ENCODE measurements at regions of chr11 and their contacts with region 1.

Region 1: GRCh38 chr11:75768112-75768908 is at the start of gene DGAT2:
- DNase-seq: peak; percentile 94
- ATAC-seq: peak; percentile 80
- H3K4me3 ChIP-seq: peak within 1 kb of the TSS; percentile 57 to 79 (median 69)
- H3K4me3 Mint-ChIP-seq: peak within 1 kb of the TSS; percentile 90
- H3K27ac ChIP-seq: peak within 1 kb of the TSS; percentile 82 to 89
- H3K27ac Mint-ChIP-seq: peak within 1 kb of the TSS; percentile 98
- H3K4me1 ChIP-seq: peaks cover 34 to 47% of the 10 kb centered on the region in 2 donors
- H3K4me1 Mint-ChIP-seq: peaks cover 55% of the 10 kb centered on the region
- H3K27me3 ChIP-seq: no peaks in the 10 kb centered on the region
- H3K27me3 Mint-ChIP-seq: no peaks in the 10 kb centered on the region
- CTCF ChIP-seq: peak; percentile 23
- total RNA-seq, gene DGAT2: 6.1 and 6.5 TPM in 2 replicates

Region 2: DNA sequence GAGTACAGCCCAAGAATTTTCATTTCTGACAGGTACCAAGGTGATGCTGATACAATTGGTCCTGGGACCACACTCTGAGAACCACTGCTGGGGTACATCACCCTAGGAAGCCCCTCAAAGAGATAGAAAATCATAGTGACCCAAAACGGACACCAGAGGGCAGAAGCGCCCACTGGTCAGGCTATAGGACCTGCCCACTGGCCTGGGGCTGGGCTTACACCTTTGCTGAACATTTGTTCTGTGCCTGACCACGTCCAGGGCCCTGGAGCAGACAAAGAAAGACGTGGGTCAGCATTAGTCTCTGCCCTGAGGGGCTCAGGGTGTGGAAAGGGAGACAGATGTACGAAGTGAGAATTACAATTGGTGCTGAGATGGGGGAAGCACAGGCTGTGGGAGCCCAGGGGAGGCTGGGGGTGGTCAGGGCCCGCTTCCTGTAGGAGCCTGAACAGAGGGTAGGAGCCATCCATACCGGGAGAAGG is 220.7 kb before region 1 on chr11:
- CTCF ChIA-PET with region 1: no interaction called
- POLR2A ChIA-PET with region 1: no interaction called
- intact Hi-C with region 1: loop called (anchors 1 kb)
- DNase-seq: peak; percentile 66
- ATAC-seq: peak; percentile 47
- H3K4me3 ChIP-seq: no peak overlapping the region
- H3K4me3 Mint-ChIP-seq: no peak overlapping the region
- H3K27ac ChIP-seq: no peak overlapping the region
- H3K27ac Mint-ChIP-seq: no peak overlapping the region
- H3K4me1 ChIP-seq: no peaks in the 10 kb centered on the region
- H3K4me1 Mint-ChIP-seq: no peaks in the 10 kb centered on the region
- H3K27me3 ChIP-seq: peaks cover 0 to 20% (median 5%) of the 10 kb centered on the region in 4 experiments
- H3K27me3 Mint-ChIP-seq: peaks cover 14% of the 10 kb centered on the region
- CTCF ChIP-seq: peak; percentile 84

Region 3: GRCh38 chr11:75689863-75690609 is 78.3 kb before region 1 on chr11:
- CTCF ChIA-PET with region 1: no interaction called
- POLR2A ChIA-PET with region 1: no interaction called
- intact Hi-C with region 1: loop called (anchors 1 kb)
- DNase-seq: peak; percentile 86
- ATAC-seq: peak; percentile 91
- H3K4me3 ChIP-seq: peak overlapping the region in 1 of 5 experiments; percentile 17
- H3K4me3 Mint-ChIP-seq: peak overlapping the region; percentile 72
- H3K27ac ChIP-seq: peak overlapping the region; percentile 79 to 80
- H3K27ac Mint-ChIP-seq: peak overlapping the region; percentile 92
- H3K4me1 ChIP-seq: peaks cover 27% of the 10 kb centered on the region in 2 donors
- H3K4me1 Mint-ChIP-seq: peaks cover 33% of the 10 kb centered on the region
- H3K27me3 ChIP-seq: peaks cover 0 to 2% (median 0%) of the 10 kb centered on the region in 4 experiments
- H3K27me3 Mint-ChIP-seq: peaks cover under 1% of the 10 kb centered on the region
- CTCF ChIP-seq: no peak

Region 4: DNA sequence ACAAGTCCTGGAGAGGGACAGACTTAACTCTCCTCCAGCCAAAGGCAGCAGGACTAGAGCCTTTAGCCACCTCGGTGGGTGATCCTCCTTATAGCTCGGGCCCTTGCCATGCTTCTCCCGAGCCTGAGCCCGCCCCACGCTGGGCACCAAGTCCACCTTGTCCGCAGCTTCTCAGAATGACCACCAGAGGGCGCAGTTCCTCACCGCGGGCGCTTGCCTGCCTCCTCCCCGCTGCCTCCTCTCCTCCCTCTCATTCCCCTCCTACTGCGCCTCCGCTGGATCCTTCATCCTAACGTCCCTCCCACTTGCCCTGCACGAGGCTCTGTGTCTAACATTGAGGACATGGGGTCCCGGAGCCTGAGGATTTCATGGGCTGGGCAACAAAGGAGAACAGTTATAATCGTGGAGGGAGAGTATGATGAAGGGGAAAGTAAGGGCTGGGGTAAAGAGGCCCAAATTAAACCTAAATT is 62.0 kb before region 1 on chr11:
- CTCF ChIA-PET with region 1: interaction called, 6 read pairs
- POLR2A ChIA-PET with region 1: no interaction called
- intact Hi-C with region 1: loop called (anchors 2 kb)
- DNase-seq: peak; percentile 82
- ATAC-seq: peak; percentile 84
- H3K4me3 ChIP-seq: no peak overlapping the region
- H3K4me3 Mint-ChIP-seq: no peak overlapping the region
- H3K27ac ChIP-seq: no peak overlapping the region
- H3K27ac Mint-ChIP-seq: no peak overlapping the region
- H3K4me1 ChIP-seq: peaks cover 0 to 7% of the 10 kb centered on the region in 2 donors
- H3K4me1 Mint-ChIP-seq: peaks cover 12% of the 10 kb centered on the region
- H3K27me3 ChIP-seq: peaks cover 0 to 8% (median 2%) of the 10 kb centered on the region in 4 experiments
- H3K27me3 Mint-ChIP-seq: peaks cover 11% of the 10 kb centered on the region
- CTCF ChIP-seq: peak; percentile 97

Region 5: DNA sequence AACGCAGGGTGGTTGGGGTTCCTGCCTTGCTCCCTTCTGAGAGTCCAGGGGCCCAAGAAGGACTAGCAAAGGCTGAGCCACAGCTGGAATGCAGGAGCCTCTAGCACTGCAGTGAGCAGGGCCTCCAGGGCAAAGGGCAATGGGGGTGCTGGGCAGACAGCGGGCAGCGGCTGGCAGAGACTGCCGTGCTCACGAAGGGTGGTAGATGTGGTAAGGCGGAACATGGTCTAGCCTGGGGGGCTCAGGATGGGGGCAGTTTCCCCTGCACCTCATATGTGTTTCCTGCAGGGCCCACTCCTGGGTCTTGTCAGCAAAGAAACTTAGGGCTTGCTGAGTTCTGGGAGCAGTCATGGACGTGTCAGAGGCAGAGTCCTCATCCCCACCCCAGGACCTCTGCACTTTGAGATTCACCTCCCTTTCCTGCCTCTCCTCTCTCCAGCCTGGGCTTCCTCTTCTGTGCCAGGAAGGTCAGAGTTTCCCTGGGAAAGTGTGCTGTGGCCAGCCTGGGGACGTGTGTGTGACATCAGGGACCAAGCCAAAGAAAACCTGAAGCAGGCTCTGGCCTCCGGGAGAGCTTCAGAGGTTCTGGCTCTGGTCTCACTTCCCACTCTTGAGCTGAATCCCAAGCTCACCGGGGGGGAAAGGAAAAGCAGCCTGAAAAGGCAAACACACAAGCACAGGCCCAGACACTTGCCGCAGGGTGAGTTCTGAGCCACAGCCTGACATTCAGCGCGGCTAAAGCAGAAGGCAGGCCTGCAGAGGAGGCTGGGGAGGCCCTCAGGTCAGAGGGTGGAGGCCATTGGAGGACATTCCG is 46.2 kb before region 1 on chr11:
- CTCF ChIA-PET with region 1: interaction called, 6 read pairs
- POLR2A ChIA-PET with region 1: interaction called, 3 read pairs
- intact Hi-C with region 1: loop called (anchors 1 kb)
- DNase-seq: no peak
- ATAC-seq: no peak
- H3K4me3 ChIP-seq: no peak overlapping the region
- H3K4me3 Mint-ChIP-seq: no peak overlapping the region
- H3K27ac ChIP-seq: no peak overlapping the region
- H3K27ac Mint-ChIP-seq: no peak overlapping the region
- H3K4me1 ChIP-seq: no peaks in the 10 kb centered on the region
- H3K4me1 Mint-ChIP-seq: no peaks in the 10 kb centered on the region
- H3K27me3 ChIP-seq: no peaks in the 10 kb centered on the region
- H3K27me3 Mint-ChIP-seq: no peaks in the 10 kb centered on the region
- CTCF ChIP-seq: no peak

Region 6: DNA sequence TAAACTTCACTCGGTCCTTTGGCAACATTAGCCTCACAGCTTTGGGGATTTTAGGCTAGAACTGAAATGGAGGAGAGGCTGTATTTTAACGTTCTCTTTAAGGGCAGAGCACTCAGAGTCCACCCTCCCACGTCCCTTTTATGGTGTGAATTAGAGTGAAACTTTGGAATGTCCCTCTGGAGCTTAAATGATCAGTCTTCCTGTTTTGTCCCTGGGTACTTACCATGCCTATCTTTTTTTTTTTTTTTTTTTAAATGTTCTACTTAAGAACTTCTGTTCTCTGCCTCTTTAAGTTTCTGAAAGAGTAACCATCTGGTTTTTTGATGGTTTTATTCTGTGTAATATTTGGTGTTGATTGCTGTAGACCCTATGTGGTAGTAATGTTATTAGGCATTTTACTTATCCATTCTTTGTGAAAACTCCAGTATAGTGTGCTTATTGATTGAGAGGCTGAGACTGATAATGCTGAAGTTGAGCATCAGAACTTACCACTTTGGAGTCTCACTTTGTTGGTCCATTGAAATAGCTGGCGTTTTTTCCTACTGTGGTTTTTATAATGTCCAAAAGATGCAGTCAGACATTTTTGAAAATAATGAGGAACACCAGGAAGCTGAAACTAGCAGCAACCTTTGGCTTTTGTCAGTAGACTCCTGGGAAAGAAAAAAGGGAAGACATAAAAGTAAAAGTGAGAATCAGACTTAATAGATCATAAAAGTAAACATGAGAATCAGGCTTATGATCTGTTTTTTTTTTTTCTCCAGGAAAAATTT is 58.3 kb after region 1 on chr11:
- CTCF ChIA-PET with region 1: interaction called, 4 read pairs
- POLR2A ChIA-PET with region 1: no interaction called
- intact Hi-C with region 1: loop called (anchors 1 kb)
- DNase-seq: peak; percentile 41
- ATAC-seq: no peak
- H3K4me3 ChIP-seq: peak overlapping the region in 1 of 5 experiments; percentile 26
- H3K4me3 Mint-ChIP-seq: peak overlapping the region; percentile 52
- H3K27ac ChIP-seq: peak overlapping the region; percentile 79 to 85
- H3K27ac Mint-ChIP-seq: peak overlapping the region; percentile 92
- H3K4me1 ChIP-seq: peaks cover 76 to 81% of the 10 kb centered on the region in 2 donors
- H3K4me1 Mint-ChIP-seq: peaks cover 80% of the 10 kb centered on the region
- H3K27me3 ChIP-seq: no peaks in the 10 kb centered on the region
- H3K27me3 Mint-ChIP-seq: no peaks in the 10 kb centered on the region
- CTCF ChIP-seq: no peak

Region 7: DNA sequence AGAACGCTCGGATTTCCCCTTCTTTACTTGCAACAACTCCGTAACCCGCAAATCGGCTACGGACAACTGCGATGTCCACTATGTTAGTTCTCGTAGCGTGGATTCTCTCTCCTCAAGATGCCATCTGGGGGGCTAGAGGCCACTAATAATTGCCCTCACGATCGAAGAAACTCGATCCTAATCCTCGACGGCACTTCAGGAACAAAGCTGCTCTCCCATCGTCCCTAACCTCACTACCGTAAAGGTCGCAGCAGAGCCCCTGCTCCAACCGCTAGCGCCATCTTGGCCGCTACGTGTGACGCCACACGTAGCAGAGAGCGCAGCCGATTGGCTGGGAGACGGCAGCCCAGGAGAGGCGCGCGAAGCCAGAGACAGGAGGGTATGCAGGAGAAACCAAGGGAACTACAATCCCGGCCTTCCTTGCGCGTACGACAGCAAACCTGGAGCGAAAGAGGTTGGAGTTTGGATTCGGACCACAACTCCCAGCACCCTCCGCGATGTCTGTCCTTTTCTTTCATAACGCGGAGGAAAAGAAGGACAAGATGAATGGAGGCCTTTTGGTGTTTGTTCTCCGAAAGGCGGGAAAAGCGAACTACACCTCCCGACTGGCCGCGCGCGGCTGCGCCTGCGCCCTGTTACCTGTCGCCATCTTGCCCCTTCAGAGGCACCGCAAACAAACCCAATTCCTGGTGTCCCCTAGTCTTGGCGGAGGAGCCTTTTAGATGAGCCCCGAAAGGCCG is 676.2 kb after region 1 on chr11 and contains the start of gene EMSY:
- CTCF ChIA-PET with region 1: no interaction called
- POLR2A ChIA-PET with region 1: no interaction called
- intact Hi-C with region 1: loop called (anchors 5 kb)
- DNase-seq: peak; percentile 96
- ATAC-seq: peak; percentile 97
- H3K4me3 ChIP-seq: peak within 1 kb of the TSS; percentile 87 to 99 (median 97)
- H3K4me3 Mint-ChIP-seq: peak within 1 kb of the TSS; percentile 96
- H3K27ac ChIP-seq: peak within 1 kb of the TSS; percentile 80 to 86
- H3K27ac Mint-ChIP-seq: peak within 1 kb of the TSS; percentile 98
- H3K4me1 ChIP-seq: peaks cover 19 to 23% of the 10 kb centered on the region in 2 donors
- H3K4me1 Mint-ChIP-seq: peaks cover 35% of the 10 kb centered on the region
- H3K27me3 ChIP-seq: no peaks in the 10 kb centered on the region
- H3K27me3 Mint-ChIP-seq: no peaks in the 10 kb centered on the region
- CTCF ChIP-seq: no peak
- total RNA-seq, gene EMSY: 54.0 and 59.7 TPM in 2 replicates

Measured in B cell (primary cell).